CD8-positive, alpha-beta T cell (primary cell): ENCODE measurements at regions of chr2 and their contacts with region 1.

Region 1: GRCh38 chr2:148644883-148645538 is 460 bp downstream of the EPC2 start:
- DNase-seq: peak; percentile 90 to 98 (median 94)
- ATAC-seq: peak; percentile 78
- H3K4me3 ChIP-seq: peak overlapping the region; percentile 85 to 87
- H3K4me3 Mint-ChIP-seq: peak overlapping the region; percentile 87
- H3K27ac ChIP-seq: peak overlapping the region; percentile 87 to 96
- H3K27ac Mint-ChIP-seq: peak overlapping the region; percentile 98
- H3K4me1 ChIP-seq: peaks cover 33% of the 10 kb centered on the region
- H3K4me1 Mint-ChIP-seq: peaks cover 36% of the 10 kb centered on the region
- H3K27me3 ChIP-seq: no peaks in the 10 kb centered on the region
- H3K27me3 Mint-ChIP-seq: no peaks in the 10 kb centered on the region
- CTCF ChIP-seq: no peak

Region 2: GRCh38 chr2:147843864-147844696 is 800.9 kb before region 1 on chr2:
- CTCF ChIA-PET with region 1: no interaction called
- POLR2A ChIA-PET with region 1: interaction called, 3 read pairs
- intact Hi-C with region 1: loop called (anchors 5 to 10 kb)
- DNase-seq: peak; percentile 71 to 90 (median 86)
- ATAC-seq: peak; percentile 80
- H3K4me3 ChIP-seq: peak overlapping the region; percentile 75 to 79
- H3K4me3 Mint-ChIP-seq: peak overlapping the region; percentile 93
- H3K27ac ChIP-seq: peak overlapping the region; percentile 51 to 54
- H3K27ac Mint-ChIP-seq: peak overlapping the region; percentile 55
- H3K4me1 ChIP-seq: peaks cover 19% of the 10 kb centered on the region
- H3K4me1 Mint-ChIP-seq: peaks cover 29% of the 10 kb centered on the region
- H3K27me3 ChIP-seq: no peaks in the 10 kb centered on the region
- H3K27me3 Mint-ChIP-seq: peaks cover 20% of the 10 kb centered on the region
- CTCF ChIP-seq: no peak

Region 3: DNA sequence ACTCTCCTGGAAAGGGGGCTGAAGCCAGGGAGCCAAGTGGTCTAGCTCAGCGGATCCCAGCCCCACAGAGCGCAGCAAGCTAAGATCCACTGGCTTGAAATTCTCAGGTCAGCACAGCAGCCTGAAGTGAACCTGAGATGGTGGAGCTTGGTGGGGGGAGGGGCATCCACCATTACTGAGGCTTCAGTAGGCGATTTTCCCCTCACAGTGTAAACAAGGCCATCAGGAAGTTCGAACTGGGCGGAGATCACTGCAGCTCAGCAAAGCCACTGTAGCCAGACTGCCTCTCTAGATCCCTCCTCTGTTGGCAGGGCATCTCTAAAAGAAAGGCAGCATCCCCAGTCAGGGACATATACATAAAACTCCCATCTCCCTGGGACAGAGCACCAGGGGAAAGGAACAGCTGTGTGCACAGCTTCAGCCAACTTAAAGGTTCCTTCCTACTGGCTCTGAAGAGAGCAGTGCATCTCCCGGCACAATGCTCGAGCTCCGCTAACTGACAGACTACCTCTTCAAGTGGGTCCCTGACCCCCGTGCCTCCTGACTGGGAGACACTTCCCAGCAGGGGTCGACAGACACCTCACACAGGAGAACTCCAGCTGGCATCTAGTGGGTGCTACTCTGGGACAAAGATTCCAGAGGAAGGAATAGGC is 282.7 kb before region 1 on chr2:
- CTCF ChIA-PET with region 1: no interaction called
- POLR2A ChIA-PET with region 1: no interaction called
- intact Hi-C with region 1: no loop called
- DNase-seq: no peak
- ATAC-seq: no peak
- H3K4me3 ChIP-seq: no peak overlapping the region
- H3K4me3 Mint-ChIP-seq: no peak overlapping the region
- H3K27ac ChIP-seq: no peak overlapping the region
- H3K27ac Mint-ChIP-seq: no peak overlapping the region
- H3K4me1 ChIP-seq: no peaks in the 10 kb centered on the region
- H3K4me1 Mint-ChIP-seq: peaks cover 2% of the 10 kb centered on the region
- H3K27me3 ChIP-seq: no peaks in the 10 kb centered on the region
- H3K27me3 Mint-ChIP-seq: no peaks in the 10 kb centered on the region
- CTCF ChIP-seq: no peak

Region 4: GRCh38 chr2:148552675-148553331 is 92.2 kb before region 1 on chr2:
- CTCF ChIA-PET with region 1: no interaction called
- POLR2A ChIA-PET with region 1: interaction called, 13 read pairs
- intact Hi-C with region 1: loop called in 1 of 2 experiments (anchors 2 kb)
- DNase-seq: peak in 4 of 9 experiments; percentile 41 to 72 (median 52)
- ATAC-seq: peak; percentile 85
- H3K4me3 ChIP-seq: peak overlapping the region; percentile 43 to 65
- H3K4me3 Mint-ChIP-seq: no peak overlapping the region
- H3K27ac ChIP-seq: peak overlapping the region; percentile 44 to 79
- H3K27ac Mint-ChIP-seq: no peak overlapping the region
- H3K4me1 ChIP-seq: peaks cover 17% of the 10 kb centered on the region
- H3K4me1 Mint-ChIP-seq: no peaks in the 10 kb centered on the region
- H3K27me3 ChIP-seq: no peaks in the 10 kb centered on the region
- H3K27me3 Mint-ChIP-seq: no peaks in the 10 kb centered on the region
- CTCF ChIP-seq: no peak

Region 5: GRCh38 chr2:148680462-148680861 is 35.5 kb after region 1 on chr2:
- CTCF ChIA-PET with region 1: no interaction called
- POLR2A ChIA-PET with region 1: no interaction called
- intact Hi-C with region 1: loop called (anchors 5 kb)
- DNase-seq: no peak
- ATAC-seq: no peak
- H3K4me3 ChIP-seq: no peak overlapping the region
- H3K4me3 Mint-ChIP-seq: no peak overlapping the region
- H3K27ac ChIP-seq: no peak overlapping the region
- H3K27ac Mint-ChIP-seq: peak overlapping the region; percentile 10
- H3K4me1 ChIP-seq: peaks cover 13% of the 10 kb centered on the region
- H3K4me1 Mint-ChIP-seq: peaks cover 77% of the 10 kb centered on the region
- H3K27me3 ChIP-seq: no peaks in the 10 kb centered on the region
- H3K27me3 Mint-ChIP-seq: no peaks in the 10 kb centered on the region
- CTCF ChIP-seq: no peak

Region 6: GRCh38 chr2:148874868-148875341 is 229.9 kb after region 1 on chr2 and contains the start of gene KIF5C:
- CTCF ChIA-PET with region 1: interaction called, 3 read pairs
- POLR2A ChIA-PET with region 1: no interaction called
- intact Hi-C with region 1: loop called (anchors 2 kb)
- DNase-seq: peak; percentile 77 to 94 (median 87)
- ATAC-seq: peak; percentile 87
- H3K4me3 ChIP-seq: peak within 1 kb of the TSS; percentile 49 to 52
- H3K4me3 Mint-ChIP-seq: peak within 1 kb of the TSS; percentile 86
- H3K27ac ChIP-seq: no peak within 1 kb of the TSS
- H3K27ac Mint-ChIP-seq: peak within 1 kb of the TSS; percentile 41
- H3K4me1 ChIP-seq: peaks cover 12% of the 10 kb centered on the region
- H3K4me1 Mint-ChIP-seq: peaks cover 18% of the 10 kb centered on the region
- H3K27me3 ChIP-seq: peaks cover 0 to 5% of the 10 kb centered on the region in 2 experiments
- H3K27me3 Mint-ChIP-seq: peaks cover 16% of the 10 kb centered on the region
- CTCF ChIP-seq: no peak
- total RNA-seq, gene KIF5C: 6.4 to 6.5 TPM